Left ventricle myocardium inferior (tissue), 1 donor: ENCODE measurements at regions of chr19 and their contacts with region 1.

Region 1: DNA sequence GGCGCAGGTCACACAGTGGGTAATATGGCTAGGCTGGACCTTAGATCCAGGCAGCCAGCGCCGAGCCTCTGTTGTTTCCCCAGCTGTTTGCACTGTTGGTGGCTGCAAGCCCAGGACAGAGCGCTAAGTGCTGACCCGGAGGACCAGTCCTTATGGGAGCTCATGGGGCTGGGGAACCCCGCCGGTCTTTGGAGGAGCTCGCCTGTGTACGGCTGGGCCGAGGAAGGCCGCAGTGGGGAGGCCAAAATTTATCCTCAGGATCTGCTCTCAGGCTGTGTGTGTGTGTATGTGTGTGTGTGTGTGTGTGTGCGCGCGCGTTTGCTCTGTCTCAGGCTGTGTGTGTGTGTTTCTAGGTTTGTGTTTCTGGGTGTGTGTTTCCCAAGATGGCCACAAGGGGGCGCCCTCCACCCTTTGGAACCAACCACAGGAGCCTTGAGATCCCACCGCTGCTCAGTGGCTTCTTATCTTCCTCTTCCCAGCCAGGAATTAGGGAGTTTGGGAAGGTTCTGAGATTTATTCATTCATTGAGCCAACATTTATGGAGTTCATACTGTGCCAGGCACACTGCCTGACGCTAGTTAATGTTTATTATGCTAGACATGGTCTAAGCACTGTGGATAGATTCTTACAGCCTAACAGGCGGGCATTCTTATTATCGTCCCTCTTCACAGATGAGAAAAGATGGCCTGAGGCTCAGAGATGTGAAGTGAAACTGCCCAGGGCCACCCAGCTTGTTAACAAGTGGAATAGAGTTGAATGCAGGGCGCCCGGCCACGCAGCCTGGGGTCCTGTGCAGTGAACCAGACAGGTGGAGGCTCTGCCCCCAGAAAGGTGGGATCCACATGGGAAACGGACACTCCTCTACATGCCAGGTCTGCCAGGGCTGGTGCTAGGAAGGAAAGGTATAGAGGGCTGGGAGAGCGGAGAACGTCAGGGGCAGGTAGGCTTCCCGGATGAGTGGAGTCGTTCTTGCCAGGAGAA is 13.0 kb downstream of the PGLYRP1 start:
- DNase-seq: peak; percentile 61
- H3K4me3 ChIP-seq: no peak overlapping the region
- H3K27ac ChIP-seq: no peak overlapping the region
- H3K4me1 ChIP-seq: peaks cover 5% of the 10 kb centered on the region
- H3K27me3 ChIP-seq: peaks cover 43% of the 10 kb centered on the region
- CTCF ChIP-seq: peak; percentile 86

Region 2: GRCh38 chr19:45913874-45914830 is 95.7 kb before region 1 on chr19 and contains the start of gene NANOS2:
- intact Hi-C with region 1: loop called (anchors 10 kb)
- DNase-seq: no peak
- H3K4me3 ChIP-seq: no peak within 1 kb of the TSS
- H3K27ac ChIP-seq: no peak within 1 kb of the TSS
- H3K4me1 ChIP-seq: no peaks in the 10 kb centered on the region
- H3K27me3 ChIP-seq: peaks cover 77% of the 10 kb centered on the region
- CTCF ChIP-seq: peak; percentile 33
- total RNA-seq, gene NANOS2: not detected